Heart right ventricle (tissue), 16 donors: ENCODE measurements at regions of chr1 and their contacts with region 1.

Region 1: DNA sequence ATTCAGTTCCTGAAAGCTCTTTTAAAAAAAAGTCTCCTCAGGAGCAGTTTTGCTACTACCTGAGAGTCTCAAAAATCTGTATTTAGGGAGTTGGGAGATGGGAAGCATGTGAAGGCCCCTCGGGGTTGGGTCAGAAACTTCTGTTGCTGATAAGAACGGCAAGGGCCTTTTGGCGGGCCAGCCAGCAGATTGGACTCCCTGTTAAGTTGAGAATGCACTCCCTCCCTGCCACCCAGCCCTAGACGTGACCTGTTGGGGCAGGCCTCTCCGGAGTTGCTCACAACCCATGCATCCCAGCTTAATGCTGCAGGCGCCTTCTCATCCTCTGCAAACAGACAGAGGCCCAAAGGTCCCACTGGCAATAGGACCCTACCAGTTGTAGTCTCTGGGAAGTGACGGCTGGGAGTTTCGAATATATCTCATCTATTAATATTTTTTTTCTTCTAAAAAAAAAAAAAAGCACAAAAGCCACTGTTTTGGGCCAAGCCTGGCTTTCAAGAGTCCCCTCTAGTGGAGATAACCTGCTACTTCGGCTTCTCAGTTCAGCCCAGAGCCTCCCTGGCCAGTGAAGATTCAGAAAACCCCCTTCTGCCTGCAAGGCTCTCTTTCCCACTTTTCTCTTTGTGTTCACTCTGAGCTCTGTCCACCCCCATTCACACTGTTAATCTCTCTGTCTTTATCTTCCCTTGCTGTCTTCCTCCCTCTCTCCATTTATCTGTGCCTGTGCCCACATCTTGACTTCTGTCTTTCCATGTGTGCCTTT is 5.3 kb downstream of the PLXNA2 start:
- DNase-seq: no peak
- ATAC-seq: peak in 4 of 8 donors; percentile 41 to 64 (median 54)
- H3K4me3 ChIP-seq: peak overlapping the region in 6 of 10 donors; percentile 5 to 96 (median 18)
- H3K27ac ChIP-seq: peak overlapping the region in 7 of 10 donors; percentile 15 to 98 (median 55)
- H3K4me1 ChIP-seq: peaks cover 19 to 92% (median 74%) of the 10 kb centered on the region in 9 donors
- H3K27me3 ChIP-seq: peaks cover 0 to 36% (median 0%) of the 10 kb centered on the region in 7 donors
- CTCF ChIP-seq: peak; percentile 72 to 89 (median 80)

Region 2: GRCh38 chr1:208132287-208132883 is 106.5 kb before region 1 on chr1:
- intact Hi-C with region 1: loop called (anchors 2 to 10 kb)
- DNase-seq: peak; percentile 85 to 87
- ATAC-seq: peak; percentile 82 to 96 (median 90)
- H3K4me3 ChIP-seq: no peak overlapping the region
- H3K27ac ChIP-seq: peak overlapping the region in 1 of 10 donors; percentile 9
- H3K4me1 ChIP-seq: peaks cover 6 to 48% (median 21%) of the 10 kb centered on the region in 9 donors
- H3K27me3 ChIP-seq: peaks cover 0 to 4% (median 0%) of the 10 kb centered on the region in 7 donors
- CTCF ChIP-seq: peak; percentile 61 to 93 (median 84)

Region 3: GRCh38 chr1:208184088-208184911 is 54.6 kb before region 1 on chr1:
- intact Hi-C with region 1: loop called in 1 of 10 experiments (anchors 10 kb)
- DNase-seq: no peak
- ATAC-seq: peak in 5 of 8 donors; percentile 53 to 93 (median 59)
- H3K4me3 ChIP-seq: no peak overlapping the region
- H3K27ac ChIP-seq: peak overlapping the region in 2 of 10 donors; percentile 4 to 40
- H3K4me1 ChIP-seq: peaks cover 18 to 77% (median 46%) of the 10 kb centered on the region in 9 donors
- H3K27me3 ChIP-seq: no peaks in the 10 kb centered on the region
- CTCF ChIP-seq: no peak

Region 4: DNA sequence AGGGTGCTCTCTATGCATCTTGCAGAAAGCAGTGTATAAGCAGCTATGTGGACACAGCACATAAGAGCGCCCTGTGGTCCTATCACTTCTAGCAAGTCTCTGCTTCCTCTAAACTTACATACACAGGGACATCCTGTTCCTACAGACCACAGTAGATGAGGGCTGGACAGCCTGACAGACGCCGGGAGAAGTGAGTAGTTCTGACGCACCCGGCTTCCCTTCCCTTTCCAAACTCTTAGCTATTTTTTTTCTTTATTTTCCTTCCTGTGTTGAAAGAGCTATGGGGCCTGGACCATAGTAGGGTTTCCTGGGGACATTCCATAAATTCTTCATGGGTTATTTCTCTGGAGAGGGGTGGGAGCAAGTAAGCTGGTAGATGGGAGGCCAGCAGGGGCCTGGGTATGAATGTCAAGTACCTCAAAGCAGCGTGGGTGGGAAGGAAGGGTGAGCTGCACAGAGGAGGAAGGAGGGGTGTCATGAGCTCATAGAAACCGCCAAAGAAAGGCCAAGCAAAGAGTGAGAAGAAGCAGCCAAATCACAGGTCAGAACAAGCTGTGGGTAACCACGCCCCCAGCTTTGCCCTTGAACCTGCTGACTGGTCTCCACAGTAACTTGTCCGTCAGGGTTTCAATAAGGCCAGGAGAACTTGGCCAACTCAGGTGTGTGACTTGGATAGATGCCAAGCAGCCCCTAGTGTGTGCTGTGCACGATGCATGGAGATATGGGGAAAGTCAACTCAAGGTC is 31.3 kb before region 1 on chr1:
- intact Hi-C with region 1: loop called in 5 of 10 experiments (anchors 5 kb)
- DNase-seq: peak; percentile 40 to 75
- ATAC-seq: peak; percentile 50 to 86 (median 80)
- H3K4me3 ChIP-seq: no peak overlapping the region
- H3K27ac ChIP-seq: peak overlapping the region; percentile 52 to 89 (median 76)
- H3K4me1 ChIP-seq: peaks cover 22 to 92% (median 74%) of the 10 kb centered on the region in 9 donors
- H3K27me3 ChIP-seq: no peaks in the 10 kb centered on the region
- CTCF ChIP-seq: no peak

Region 5: GRCh38 chr1:208219659-208220282 is 19.1 kb before region 1 on chr1:
- intact Hi-C with region 1: loop called in 1 of 10 experiments (anchors 2 kb)
- DNase-seq: peak; percentile 69 to 87
- ATAC-seq: peak; percentile 83 to 92 (median 88)
- H3K4me3 ChIP-seq: peak overlapping the region in 2 of 10 donors; percentile 6 to 9
- H3K27ac ChIP-seq: peak overlapping the region; percentile 70 to 88 (median 84)
- H3K4me1 ChIP-seq: peaks cover 43 to 99% (median 75%) of the 10 kb centered on the region in 9 donors
- H3K27me3 ChIP-seq: no peaks in the 10 kb centered on the region
- CTCF ChIP-seq: no peak

Region 6: GRCh38 chr1:208298593-208299269 is 59.8 kb after region 1 on chr1:
- intact Hi-C with region 1: no loop called
- DNase-seq: peak in 1 of 2 donors; percentile 13
- ATAC-seq: no peak
- H3K4me3 ChIP-seq: no peak overlapping the region
- H3K27ac ChIP-seq: no peak overlapping the region
- H3K4me1 ChIP-seq: no peaks in the 10 kb centered on the region
- H3K27me3 ChIP-seq: peaks cover 0 to 34% (median 7%) of the 10 kb centered on the region in 7 donors
- CTCF ChIP-seq: no peak